ENCODE measurements at regions of chr11 and their contacts with region 1.

Region 1: GRCh38 chr11:61541598-61541997 is 33.0 kb downstream of the LRRC10B start:
- DNase-seq: peak in 2 of 3 donors; percentile 11 to 20
- H3K4me3 ChIP-seq: no peak overlapping the region
- H3K4me3 Mint-ChIP-seq: peak overlapping the region in 1 of 2 donors; percentile 27
- H3K27ac ChIP-seq: no peak overlapping the region
- H3K27ac Mint-ChIP-seq: peak overlapping the region in 1 of 7 donors; percentile 35
- H3K4me1 ChIP-seq: peaks cover 3 to 6% of the 10 kb centered on the region in 2 donors
- H3K4me1 Mint-ChIP-seq: peaks cover 6% of the 10 kb centered on the region
- H3K27me3 ChIP-seq: peaks cover 0 to 5% of the 10 kb centered on the region in 2 donors
- H3K27me3 Mint-ChIP-seq: peaks cover 13 to 15% (median 15%) of the 10 kb centered on the region in 3 donors
- CTCF ChIP-seq: no peak

Region 2: GRCh38 chr11:61621917-61622585 is 80.5 kb after region 1 on chr11:
- intact Hi-C with region 1: loop called in 1 of 2 experiments (anchors 5 kb)
- DNase-seq: no peak
- H3K4me3 ChIP-seq: no peak overlapping the region
- H3K4me3 Mint-ChIP-seq: no peak overlapping the region
- H3K27ac ChIP-seq: no peak overlapping the region
- H3K27ac Mint-ChIP-seq: no peak overlapping the region
- H3K4me1 ChIP-seq: no peaks in the 10 kb centered on the region
- H3K4me1 Mint-ChIP-seq: no peaks in the 10 kb centered on the region
- H3K27me3 ChIP-seq: no peaks in the 10 kb centered on the region
- H3K27me3 Mint-ChIP-seq: peaks cover 2 to 18% (median 10%) of the 10 kb centered on the region in 3 donors
- CTCF ChIP-seq: no peak

Region 3: GRCh38 chr11:62132188-62132587 is 590.6 kb after region 1 on chr11:
- intact Hi-C with region 1: no loop called
- DNase-seq: no peak
- H3K4me3 ChIP-seq: no peak overlapping the region
- H3K4me3 Mint-ChIP-seq: no peak overlapping the region
- H3K27ac ChIP-seq: peak overlapping the region in 1 of 2 donors; percentile 13
- H3K27ac Mint-ChIP-seq: peak overlapping the region in 3 of 7 donors; percentile 33 to 78 (median 64)
- H3K4me1 ChIP-seq: no peaks in the 10 kb centered on the region
- H3K4me1 Mint-ChIP-seq: peaks cover 7% of the 10 kb centered on the region
- H3K27me3 ChIP-seq: no peaks in the 10 kb centered on the region
- H3K27me3 Mint-ChIP-seq: no peaks in the 10 kb centered on the region
- CTCF ChIP-seq: no peak

Measured in CD14-positive monocyte (primary cell).